ENCODE measurements at regions of chr16 and their contacts with region 1.

Region 1: GRCh38 chr16:79601931-79602627 is 1.5 kb upstream of the MAF start:
- DNase-seq: peak; percentile 68 to 73
- ATAC-seq: peak; percentile 22 to 23
- H3K4me3 ChIP-seq: peak overlapping the region; percentile 74 to 89 (median 86)
- H3K27ac ChIP-seq: peak overlapping the region; percentile 92 to 98 (median 98)
- H3K4me1 ChIP-seq: peaks cover 18 to 19% of the 10 kb centered on the region in 2 donors
- H3K27me3 ChIP-seq: no peaks in the 10 kb centered on the region
- CTCF ChIP-seq: peak; percentile 69 to 81 (median 79)
- POLR2A ChIP-seq: no peak

Region 2: DNA sequence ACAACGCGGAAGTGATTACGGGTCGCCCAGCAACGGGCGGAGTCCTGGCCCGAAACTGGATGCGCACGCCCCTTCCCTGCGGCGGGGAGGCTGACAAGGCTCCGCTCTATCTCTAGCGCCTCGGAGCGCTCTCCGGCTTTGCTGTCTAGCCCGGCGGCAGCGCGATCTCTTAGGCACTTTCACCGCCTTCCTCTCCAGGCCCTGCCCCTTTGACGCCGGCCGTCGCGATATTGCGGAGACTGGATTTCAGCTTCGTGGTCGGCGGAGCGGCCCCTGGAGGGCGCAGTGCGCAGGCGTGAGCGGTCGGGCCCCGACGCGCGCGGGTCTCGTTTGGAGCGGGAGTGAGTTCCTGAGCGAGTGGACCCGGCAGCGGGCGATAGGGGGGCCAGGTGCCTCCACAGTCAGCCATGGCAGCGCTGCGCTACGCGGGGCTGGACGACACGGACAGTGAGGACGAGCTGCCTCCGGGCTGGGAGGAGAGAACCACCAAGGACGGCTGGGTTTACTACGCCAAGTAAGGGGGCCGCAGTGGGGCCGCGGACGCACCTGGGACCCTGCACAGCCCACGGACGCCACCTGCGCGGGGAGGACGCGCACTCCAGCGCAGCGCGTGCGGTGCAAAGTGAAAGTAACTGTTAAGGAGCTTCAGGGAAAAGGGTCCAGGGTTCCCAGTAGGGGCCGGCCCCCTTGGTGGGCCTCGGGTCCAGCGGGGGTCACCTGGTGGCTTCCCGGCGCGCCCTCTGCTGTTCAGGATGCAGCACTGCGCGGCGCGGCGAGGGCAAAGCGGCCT is 1502.5 kb before region 1 on chr16 and contains the start of gene WWOX:
- in situ Hi-C with region 1: loop called in 1 of 4 experiments (anchors 25 kb)
- intact Hi-C with region 1: no loop called
- DNase-seq: peak; percentile 91 to 95
- ATAC-seq: peak; percentile 95 to 97
- H3K4me3 ChIP-seq: peak within 1 kb of the TSS; percentile 79 to 93 (median 92)
- H3K27ac ChIP-seq: peak within 1 kb of the TSS; percentile 83 to 90 (median 86)
- H3K4me1 ChIP-seq: peaks cover 5 to 6% of the 10 kb centered on the region in 2 donors
- H3K27me3 ChIP-seq: no peaks in the 10 kb centered on the region
- CTCF ChIP-seq: peak; percentile 63 to 90 (median 80)
- POLR2A ChIP-seq: peak; percentile 33 to 60
- total RNA-seq, gene WWOX: 3.3 to 13.0 (median 6.0) TPM

Region 3: DNA sequence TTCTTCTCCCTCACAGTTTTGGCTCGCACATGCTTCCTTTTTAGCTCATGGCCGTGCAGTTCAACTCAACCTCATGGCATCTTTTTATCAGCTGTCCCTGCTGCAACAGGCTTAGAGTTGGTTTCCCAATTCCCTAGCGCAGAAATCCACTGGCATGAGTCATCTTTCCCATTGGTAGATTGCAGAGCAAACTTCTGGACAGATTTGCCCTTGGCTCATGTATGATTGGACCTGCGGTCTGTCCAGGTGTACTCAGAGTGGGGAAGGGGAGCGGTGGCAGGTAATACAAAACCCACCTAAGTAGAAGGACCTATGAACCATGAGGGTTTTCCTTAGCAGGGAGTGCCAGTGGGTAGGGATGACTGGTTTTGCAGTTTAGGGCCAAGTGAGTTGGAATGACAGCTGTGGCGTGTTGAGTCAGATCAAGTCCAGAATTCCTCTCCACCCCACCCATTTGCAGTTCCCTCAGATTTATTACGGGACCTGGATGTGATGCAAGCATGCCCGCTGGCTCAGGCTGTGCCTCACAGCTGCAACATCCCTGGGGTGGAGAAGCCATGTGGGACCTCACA is 918.0 kb before region 1 on chr16:
- in situ Hi-C with region 1: no loop called
- intact Hi-C with region 1: loop called (anchors 1 kb)
- DNase-seq: peak; percentile 78 to 88
- ATAC-seq: peak; percentile 93 to 97
- H3K4me3 ChIP-seq: no peak overlapping the region
- H3K27ac ChIP-seq: peak overlapping the region; percentile 68 to 73 (median 70)
- H3K4me1 ChIP-seq: peaks cover 6 to 23% of the 10 kb centered on the region in 2 donors
- H3K27me3 ChIP-seq: no peaks in the 10 kb centered on the region
- CTCF ChIP-seq: no peak
- POLR2A ChIP-seq: no peak

Region 4: DNA sequence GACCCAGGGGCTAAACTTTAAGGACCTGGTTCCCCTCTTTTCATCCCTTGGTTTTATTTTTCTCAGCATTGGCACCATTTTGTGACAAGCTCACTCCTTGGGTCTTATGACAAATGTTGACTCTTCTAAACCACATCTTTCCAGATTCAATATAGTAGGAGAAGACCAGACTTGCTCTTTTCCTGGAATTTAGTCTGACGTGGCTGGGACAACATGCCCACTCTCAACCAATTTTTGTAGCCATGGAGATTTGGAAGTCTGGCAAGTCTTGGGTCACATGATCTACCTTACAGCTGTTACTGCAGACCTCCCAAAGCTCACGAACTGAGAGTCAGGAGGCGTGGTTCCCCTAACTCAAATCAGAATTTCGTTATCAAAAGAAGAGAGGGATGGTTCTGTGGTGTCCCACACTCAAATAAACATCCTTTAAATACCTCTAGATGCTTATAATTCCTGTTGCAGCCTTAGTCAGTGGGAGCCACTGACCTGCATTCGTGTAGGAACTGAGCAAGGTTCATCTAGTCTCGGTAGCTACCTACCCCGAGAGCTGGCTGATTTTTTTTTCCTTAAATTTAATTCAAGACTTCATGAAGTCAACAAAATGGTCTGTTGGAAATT is 685.0 kb before region 1 on chr16:
- in situ Hi-C with region 1: loop called in 3 of 4 experiments (anchors 10 kb)
- intact Hi-C with region 1: no loop called
- DNase-seq: no peak
- ATAC-seq: no peak
- H3K4me3 ChIP-seq: no peak overlapping the region
- H3K27ac ChIP-seq: no peak overlapping the region
- H3K4me1 ChIP-seq: no peaks in the 10 kb centered on the region
- H3K27me3 ChIP-seq: no peaks in the 10 kb centered on the region
- CTCF ChIP-seq: no peak
- POLR2A ChIP-seq: no peak

Region 5: GRCh38 chr16:79320956-79321355 is 281.1 kb before region 1 on chr16:
- in situ Hi-C with region 1: no loop called
- intact Hi-C with region 1: loop called (anchors 2 kb)
- DNase-seq: peak; percentile 34 to 74
- ATAC-seq: peak; percentile 90 to 95
- H3K4me3 ChIP-seq: no peak overlapping the region
- H3K27ac ChIP-seq: peak overlapping the region in 1 of 4 donors; percentile 2
- H3K4me1 ChIP-seq: peaks cover 14 to 20% of the 10 kb centered on the region in 2 donors
- H3K27me3 ChIP-seq: no peaks in the 10 kb centered on the region
- CTCF ChIP-seq: peak; percentile 44 to 68 (median 54)
- POLR2A ChIP-seq: no peak

Region 6: GRCh38 chr16:79469999-79470398 is 132.1 kb before region 1 on chr16:
- in situ Hi-C with region 1: no loop called
- intact Hi-C with region 1: loop called (anchors 2 kb)
- DNase-seq: peak; percentile 12 to 39
- ATAC-seq: no peak
- H3K4me3 ChIP-seq: no peak overlapping the region
- H3K27ac ChIP-seq: no peak overlapping the region
- H3K4me1 ChIP-seq: peaks cover 18 to 22% of the 10 kb centered on the region in 2 donors
- H3K27me3 ChIP-seq: no peaks in the 10 kb centered on the region
- CTCF ChIP-seq: no peak
- POLR2A ChIP-seq: no peak

Measured in gastrocnemius medialis (tissue), 4 donors.